ENCODE measurements at regions of chr4 and their contacts with region 1.

Region 1: DNA sequence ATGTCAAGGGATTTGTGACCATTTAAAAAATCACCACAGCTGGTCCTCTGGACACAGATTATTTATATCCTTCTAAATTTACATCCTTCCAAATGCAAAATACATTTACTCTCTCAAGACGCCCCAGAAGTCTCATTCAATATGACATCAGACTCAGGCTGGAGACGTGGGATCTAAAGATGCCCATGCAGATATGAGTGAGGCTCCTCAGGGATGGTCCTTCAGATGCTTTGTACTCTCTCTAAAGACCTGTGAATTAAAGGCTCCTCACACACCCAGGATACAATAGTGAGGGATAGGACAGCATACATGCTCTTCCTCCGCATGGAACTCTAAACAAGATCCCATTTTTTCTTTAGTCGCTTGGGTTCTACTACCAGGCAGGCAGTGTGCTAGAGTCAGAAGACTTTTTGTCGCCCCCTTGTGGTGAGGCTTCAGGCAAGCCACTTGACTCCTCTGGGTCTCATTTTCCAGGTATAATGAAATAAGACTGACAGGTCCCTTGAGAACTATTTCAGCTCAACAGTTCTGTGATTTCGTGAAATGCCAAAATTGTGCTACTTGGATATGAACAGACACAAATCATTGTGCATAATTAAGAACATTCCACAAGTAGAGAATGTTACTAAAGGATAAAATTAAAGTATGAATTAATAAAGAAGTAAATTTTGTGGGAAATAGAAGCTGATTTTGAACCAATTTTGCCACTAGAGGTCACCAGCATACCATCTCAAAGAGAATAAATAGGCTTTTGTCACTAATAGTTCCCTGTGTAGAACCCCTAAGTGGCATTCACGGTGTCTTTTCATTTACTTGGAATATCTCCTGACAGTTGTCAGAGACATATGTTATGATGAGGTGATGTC is 13.7 kb upstream of the SCOC start:
- DNase-seq: peak in 1 of 2 donors; percentile 87
- H3K4me3 ChIP-seq: no peak overlapping the region
- H3K27ac ChIP-seq: no peak overlapping the region
- H3K4me1 ChIP-seq: no peaks in the 10 kb centered on the region
- H3K27me3 ChIP-seq: no peaks in the 10 kb centered on the region
- CTCF ChIP-seq: peak; percentile 42 to 80 (median 77)

Region 2: DNA sequence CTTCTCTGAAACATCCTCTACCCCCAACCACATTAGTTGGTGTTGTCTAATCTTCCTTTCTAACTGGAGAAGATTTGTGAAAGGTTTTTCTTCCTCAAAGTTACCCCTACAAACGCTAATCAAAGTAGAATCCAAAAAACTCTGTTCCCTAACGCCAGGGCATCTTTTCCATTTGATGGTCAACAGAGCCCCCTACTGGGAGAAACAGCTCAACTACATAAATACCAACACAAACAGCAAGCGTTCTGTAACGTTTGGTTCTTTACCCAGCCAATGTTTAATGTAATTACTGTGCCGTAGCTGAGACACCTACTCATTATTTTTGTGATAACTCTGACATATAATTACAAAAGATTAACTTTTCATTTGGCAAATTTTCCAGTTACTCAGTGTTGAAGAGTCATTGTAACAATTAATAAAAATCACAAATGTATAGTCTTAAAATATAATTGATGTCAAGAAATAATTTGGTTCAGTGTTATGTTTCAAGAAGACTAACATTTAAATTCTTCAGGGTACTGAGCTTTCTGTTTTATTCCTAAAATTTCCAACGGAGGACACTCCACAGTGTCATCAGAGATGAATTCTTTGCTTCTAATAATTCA is 491.3 kb after region 1 on chr4:
- intact Hi-C with region 1: loop called (anchors 2 kb)
- DNase-seq: peak in 1 of 2 donors; percentile 67
- H3K4me3 ChIP-seq: no peak overlapping the region
- H3K27ac ChIP-seq: no peak overlapping the region
- H3K4me1 ChIP-seq: no peaks in the 10 kb centered on the region
- H3K27me3 ChIP-seq: no peaks in the 10 kb centered on the region
- CTCF ChIP-seq: peak; percentile 71 to 78 (median 76)